Calu3 (cell line): ENCODE measurements at regions of chr17 and their contacts with region 1.

Region 1: GRCh38 chr17:40139566-40140058 is 725 bp upstream of the CASC3 start:
- DNase-seq: peak; percentile 72
- H3K4me3 Mint-ChIP-seq: peak overlapping the region; percentile 98
- H3K27ac Mint-ChIP-seq: peak overlapping the region; percentile 98
- H3K4me1 Mint-ChIP-seq: peaks cover 45% of the 10 kb centered on the region
- H3K27me3 Mint-ChIP-seq: no peaks in the 10 kb centered on the region
- CTCF ChIP-seq: no peak

Region 2: GRCh38 chr17:40015005-40015997 is 124.3 kb before region 1 on chr17 and contains the start of gene CSF3:
- CTCF ChIA-PET with region 1: interaction called, 13 read pairs
- intact Hi-C with region 1: no loop called
- DNase-seq: peak; percentile 66
- H3K4me3 Mint-ChIP-seq: no peak within 1 kb of the TSS
- H3K27ac Mint-ChIP-seq: no peak within 1 kb of the TSS
- H3K4me1 Mint-ChIP-seq: peaks cover 10% of the 10 kb centered on the region
- H3K27me3 Mint-ChIP-seq: peaks cover 74% of the 10 kb centered on the region
- CTCF ChIP-seq: no peak
- total RNA-seq, gene CSF3: 0.38 TPM in 1 of 2 replicates, not detected in the other

Region 3: GRCh38 chr17:40075201-40075941 is 64.2 kb before region 1 on chr17:
- CTCF ChIA-PET with region 1: interaction called, 45 read pairs
- intact Hi-C with region 1: no loop called
- DNase-seq: peak; percentile 98
- H3K4me3 Mint-ChIP-seq: peak overlapping the region; percentile 14
- H3K27ac Mint-ChIP-seq: peak overlapping the region; percentile 6
- H3K4me1 Mint-ChIP-seq: peaks cover 70% of the 10 kb centered on the region
- H3K27me3 Mint-ChIP-seq: no peaks in the 10 kb centered on the region
- CTCF ChIP-seq: no peak

Region 4: GRCh38 chr17:40121181-40122135 is 18.2 kb before region 1 on chr17 and contains the start of gene MSL1:
- CTCF ChIA-PET with region 1: interaction called, 161 read pairs
- intact Hi-C with region 1: loop called (anchors 1 kb)
- DNase-seq: peak; percentile 100
- H3K4me3 Mint-ChIP-seq: peak within 1 kb of the TSS; percentile 86
- H3K27ac Mint-ChIP-seq: peak within 1 kb of the TSS; percentile 53
- H3K4me1 Mint-ChIP-seq: peaks cover 48% of the 10 kb centered on the region
- H3K27me3 Mint-ChIP-seq: no peaks in the 10 kb centered on the region
- CTCF ChIP-seq: no peak
- total RNA-seq, gene MSL1: 505 and 524 TPM in 2 replicates

Region 5: GRCh38 chr17:40177275-40177874 is 37.8 kb after region 1 on chr17 and contains the start of gene RAPGEFL1:
- CTCF ChIA-PET with region 1: interaction called, 19 read pairs
- intact Hi-C with region 1: no loop called
- DNase-seq: peak; percentile 100
- H3K4me3 Mint-ChIP-seq: peak within 1 kb of the TSS; percentile 76
- H3K27ac Mint-ChIP-seq: peak within 1 kb of the TSS; percentile 61
- H3K4me1 Mint-ChIP-seq: peaks cover 51% of the 10 kb centered on the region
- H3K27me3 Mint-ChIP-seq: no peaks in the 10 kb centered on the region
- CTCF ChIP-seq: no peak
- total RNA-seq, gene RAPGEFL1: 57.9 and 86.3 TPM in 2 replicates

Region 6: DNA sequence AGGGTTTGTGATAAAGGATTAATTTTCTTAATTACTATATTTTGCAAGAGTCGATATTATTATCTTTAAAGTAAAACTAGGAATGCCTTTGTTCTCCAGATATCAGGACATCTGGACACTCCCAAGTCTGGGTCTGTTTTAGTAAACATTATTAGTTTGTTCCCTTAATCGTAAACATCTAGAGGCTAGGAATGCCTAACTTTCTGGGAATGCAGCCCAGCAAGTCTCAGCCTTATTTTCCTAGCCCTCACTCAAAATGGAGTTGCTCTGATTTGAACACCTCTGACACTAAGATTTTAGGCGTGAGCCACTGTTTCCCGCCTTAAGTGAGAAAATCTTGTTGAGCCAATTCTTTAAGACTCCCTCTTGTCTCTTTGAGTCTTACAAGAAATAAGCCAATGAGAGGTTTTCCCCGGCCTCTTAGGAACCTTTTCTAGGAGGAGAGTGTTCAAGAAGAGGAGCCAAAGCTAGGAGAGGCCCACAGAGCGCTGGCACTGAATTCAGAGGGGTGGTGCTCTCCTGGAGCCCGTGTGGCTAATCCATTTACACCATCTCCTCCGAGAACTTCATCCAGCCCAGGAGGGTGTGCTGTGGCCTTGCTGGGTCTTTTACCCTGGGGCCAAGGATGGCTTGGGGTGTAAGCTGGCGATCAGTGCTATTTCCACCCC is 467.2 kb after region 1 on chr17:
- CTCF ChIA-PET with region 1: interaction called, 10 read pairs
- intact Hi-C with region 1: no loop called
- DNase-seq: no peak
- H3K4me3 Mint-ChIP-seq: no peak overlapping the region
- H3K27ac Mint-ChIP-seq: no peak overlapping the region
- H3K4me1 Mint-ChIP-seq: no peaks in the 10 kb centered on the region
- H3K27me3 Mint-ChIP-seq: peaks cover 82% of the 10 kb centered on the region
- CTCF ChIP-seq: no peak